CD4-positive, alpha-beta memory T cell (primary cell): ENCODE measurements at regions of chr21 and their contacts with region 1.

Region 1: DNA sequence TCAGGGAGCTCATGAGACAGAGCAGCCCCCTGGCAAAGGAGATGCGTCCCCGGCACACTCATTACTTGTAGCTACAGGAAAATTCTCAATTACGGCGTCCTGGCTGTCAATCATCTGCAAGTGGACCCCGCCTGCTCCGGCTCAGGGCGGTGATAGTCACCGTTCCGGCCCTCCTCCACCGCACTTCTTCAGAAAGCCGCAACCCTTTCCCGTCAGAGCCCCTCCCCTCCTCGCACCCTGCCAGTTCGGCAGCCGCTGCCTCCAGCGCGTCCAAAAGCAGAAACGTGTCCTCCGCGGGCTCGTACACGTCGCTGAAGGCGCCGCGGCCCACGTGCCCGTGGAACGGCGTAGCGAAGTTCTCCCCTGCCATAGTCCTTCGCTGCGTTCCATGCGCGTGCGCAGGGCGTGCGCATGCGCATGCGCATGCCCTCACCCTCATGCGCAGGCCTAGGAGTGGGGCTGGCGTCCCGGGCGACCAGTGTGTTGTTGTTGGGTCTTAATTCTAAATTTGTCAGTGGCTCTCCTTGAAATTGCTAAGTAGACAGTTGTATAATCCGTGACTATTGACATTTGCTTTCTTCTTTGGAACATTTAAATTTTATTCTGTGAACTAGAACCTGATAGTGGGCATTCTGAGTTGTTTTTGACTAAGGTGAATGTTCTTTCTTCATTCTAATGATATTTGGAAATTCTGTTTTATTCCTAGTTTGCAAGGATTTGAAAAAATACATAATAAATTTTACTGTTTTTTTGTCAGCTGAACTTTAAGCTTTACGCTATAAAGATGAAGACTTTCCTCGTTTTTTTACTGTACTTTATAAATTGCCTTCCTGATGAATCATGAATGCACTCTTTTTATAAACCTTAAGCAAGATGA is 107.5 kb downstream of the LTN1 start:
- DNase-seq: peak; percentile 92 to 95 (median 95)
- H3K4me3 ChIP-seq: peak overlapping the region; percentile 10 to 70
- H3K4me3 Mint-ChIP-seq: peak overlapping the region; percentile 92 to 98 (median 96)
- H3K27ac ChIP-seq: peak overlapping the region; percentile 87
- H3K27ac Mint-ChIP-seq: peak overlapping the region; percentile 95 to 99 (median 98)
- H3K4me1 ChIP-seq: peaks cover 20% of the 10 kb centered on the region
- H3K4me1 Mint-ChIP-seq: peaks cover 15 to 31% (median 19%) of the 10 kb centered on the region in 4 donors
- H3K27me3 ChIP-seq: no peaks in the 10 kb centered on the region
- H3K27me3 Mint-ChIP-seq: peaks cover 0 to 1% of the 10 kb centered on the region in 2 donors

Region 2: DNA sequence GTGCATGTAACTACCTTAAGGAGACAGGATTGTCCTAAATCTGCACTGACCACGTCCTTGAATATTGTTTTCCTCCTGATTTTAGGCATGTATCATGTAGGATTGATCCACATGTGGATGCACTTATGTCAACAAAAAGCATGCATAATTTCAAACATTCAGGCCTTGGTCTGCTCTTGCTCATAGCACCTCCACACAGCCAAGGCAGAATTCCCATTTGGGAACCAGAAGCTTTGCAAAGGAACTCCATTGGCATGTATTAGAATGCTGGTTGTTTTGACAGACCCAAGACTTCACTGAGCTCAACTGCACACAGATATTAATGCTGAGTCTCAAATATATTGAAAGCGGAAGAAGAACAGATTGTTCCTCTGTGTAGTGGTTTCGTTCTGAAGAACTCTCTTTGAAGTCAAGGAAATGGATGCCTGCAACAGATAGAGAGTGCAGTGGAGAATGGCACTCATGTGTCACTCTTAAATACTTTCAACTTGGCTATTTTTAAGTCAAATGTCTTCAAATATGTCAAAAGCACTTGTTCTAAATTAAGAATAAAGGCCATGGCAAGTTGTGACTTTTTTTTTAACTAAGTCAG is 280.2 kb before region 1 on chr21:
- CTCF ChIA-PET with region 1: no interaction called
- POLR2A ChIA-PET with region 1: no interaction called
- intact Hi-C with region 1: loop called (anchors 10 kb)
- DNase-seq: peak in 4 of 5 donors; percentile 49 to 62 (median 56)
- H3K4me3 ChIP-seq: peak overlapping the region in 1 of 2 donors; percentile 1
- H3K4me3 Mint-ChIP-seq: peak overlapping the region in 7 of 8 donors; percentile 51 to 89 (median 66)
- H3K27ac ChIP-seq: no peak overlapping the region
- H3K27ac Mint-ChIP-seq: peak overlapping the region in 6 of 7 donors; percentile 61 to 89 (median 72)
- H3K4me1 ChIP-seq: peaks cover 19% of the 10 kb centered on the region
- H3K4me1 Mint-ChIP-seq: peaks cover 18 to 38% (median 20%) of the 10 kb centered on the region in 4 donors
- H3K27me3 ChIP-seq: no peaks in the 10 kb centered on the region
- H3K27me3 Mint-ChIP-seq: peaks cover 0 to 2% of the 10 kb centered on the region in 2 donors

Region 3: GRCh38 chr21:28832013-28832714 is 53.0 kb before region 1 on chr21:
- CTCF ChIA-PET with region 1: interaction called, 4 read pairs
- POLR2A ChIA-PET with region 1: interaction called, 42 read pairs
- intact Hi-C with region 1: loop called (anchors 1 kb)
- DNase-seq: peak; percentile 39 to 65 (median 52)
- H3K4me3 ChIP-seq: peak overlapping the region in 1 of 2 donors; percentile 36
- H3K4me3 Mint-ChIP-seq: peak overlapping the region; percentile 33 to 89 (median 69)
- H3K27ac ChIP-seq: no peak overlapping the region
- H3K27ac Mint-ChIP-seq: peak overlapping the region; percentile 48 to 89 (median 67)
- H3K4me1 ChIP-seq: peaks cover 82% of the 10 kb centered on the region
- H3K4me1 Mint-ChIP-seq: peaks cover 58 to 83% (median 66%) of the 10 kb centered on the region in 4 donors
- H3K27me3 ChIP-seq: no peaks in the 10 kb centered on the region
- H3K27me3 Mint-ChIP-seq: no peaks in the 10 kb centered on the region

Region 4: GRCh38 chr21:28904961-28905435 is 19.8 kb after region 1 on chr21:
- CTCF ChIA-PET with region 1: no interaction called
- POLR2A ChIA-PET with region 1: no interaction called
- intact Hi-C with region 1: no loop called
- DNase-seq: no peak
- H3K4me3 ChIP-seq: no peak overlapping the region
- H3K4me3 Mint-ChIP-seq: no peak overlapping the region
- H3K27ac ChIP-seq: no peak overlapping the region
- H3K27ac Mint-ChIP-seq: no peak overlapping the region
- H3K4me1 ChIP-seq: no peaks in the 10 kb centered on the region
- H3K4me1 Mint-ChIP-seq: no peaks in the 10 kb centered on the region
- H3K27me3 ChIP-seq: no peaks in the 10 kb centered on the region
- H3K27me3 Mint-ChIP-seq: no peaks in the 10 kb centered on the region

Region 5: GRCh38 chr21:28992526-28993292 is 107.5 kb after region 1 on chr21 and contains the start of gene LTN1:
- CTCF ChIA-PET with region 1: no interaction called
- POLR2A ChIA-PET with region 1: interaction called, 10 read pairs
- intact Hi-C with region 1: loop called (anchors 1 kb)
- DNase-seq: peak; percentile 98 to 99 (median 99)
- H3K4me3 ChIP-seq: peak within 1 kb of the TSS; percentile 87 to 98
- H3K4me3 Mint-ChIP-seq: peak within 1 kb of the TSS; percentile 90 to 98 (median 96)
- H3K27ac ChIP-seq: peak within 1 kb of the TSS; percentile 82
- H3K27ac Mint-ChIP-seq: peak within 1 kb of the TSS; percentile 85 to 100 (median 99)
- H3K4me1 ChIP-seq: peaks cover 31% of the 10 kb centered on the region
- H3K4me1 Mint-ChIP-seq: peaks cover 24 to 54% (median 36%) of the 10 kb centered on the region in 4 donors
- H3K27me3 ChIP-seq: no peaks in the 10 kb centered on the region
- H3K27me3 Mint-ChIP-seq: no peaks in the 10 kb centered on the region
- total RNA-seq, gene LTN1: 34.6 to 39.5 TPM